ENCODE measurements at regions of chr22 and their contacts with region 1.

Region 1: DNA sequence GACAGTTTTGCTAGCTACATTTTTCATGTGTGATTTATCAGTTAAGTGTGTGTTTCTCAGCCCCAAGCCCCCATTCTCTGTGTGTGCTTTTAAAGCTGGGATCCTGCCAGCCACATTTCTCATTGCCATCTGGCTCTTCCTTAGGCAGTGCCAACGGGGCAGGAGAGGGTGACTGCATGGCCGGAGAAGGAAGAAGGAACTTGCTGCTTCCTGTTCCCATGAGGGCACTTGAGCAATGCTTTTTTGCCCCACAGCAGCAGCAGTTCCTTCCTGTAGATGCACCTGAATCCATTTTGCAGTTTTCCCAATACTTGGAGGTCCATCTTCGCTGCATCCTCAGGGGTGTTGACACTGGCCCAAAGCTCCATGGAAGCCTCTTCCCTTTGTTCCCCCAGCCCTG is 37.5 kb downstream of the TNRC6B start:
- DNase-seq: no peak
- H3K4me3 ChIP-seq: no peak overlapping the region
- H3K4me3 Mint-ChIP-seq: peak overlapping the region in 7 of 8 donors; percentile 58 to 89 (median 81)
- H3K27ac ChIP-seq: peak overlapping the region; percentile 64
- H3K27ac Mint-ChIP-seq: peak overlapping the region; percentile 83 to 94 (median 94)
- H3K4me1 ChIP-seq: peaks cover 95% of the 10 kb centered on the region
- H3K4me1 Mint-ChIP-seq: peaks cover 76 to 94% (median 84%) of the 10 kb centered on the region in 4 donors
- H3K27me3 ChIP-seq: no peaks in the 10 kb centered on the region
- H3K27me3 Mint-ChIP-seq: no peaks in the 10 kb centered on the region

Region 2: DNA sequence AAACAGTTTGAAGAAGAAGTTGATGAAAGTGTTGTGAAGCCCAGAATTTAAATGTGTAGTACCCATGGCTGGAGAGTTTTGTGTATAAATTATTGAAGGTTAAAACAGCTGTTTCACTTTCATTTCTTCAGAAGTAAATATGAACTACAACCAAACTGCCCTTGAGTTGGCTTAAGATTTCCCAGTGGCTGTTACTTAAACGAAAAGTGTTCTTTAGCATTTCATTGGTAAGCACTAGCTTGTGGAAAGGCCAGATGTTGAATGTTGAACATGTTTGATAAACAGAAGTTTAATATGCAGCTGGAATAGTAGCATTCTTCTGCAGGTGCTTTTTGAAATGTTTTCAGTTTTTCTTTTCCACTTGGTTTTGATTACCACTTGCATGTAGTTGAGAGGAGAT is 120.8 kb before region 1 on chr22:
- CTCF ChIA-PET with region 1: no interaction called
- POLR2A ChIA-PET with region 1: no interaction called
- intact Hi-C with region 1: no loop called
- DNase-seq: peak in 2 of 5 donors; percentile 14 to 23
- H3K4me3 ChIP-seq: no peak overlapping the region
- H3K4me3 Mint-ChIP-seq: peak overlapping the region; percentile 1 to 86 (median 51)
- H3K27ac ChIP-seq: no peak overlapping the region
- H3K27ac Mint-ChIP-seq: peak overlapping the region in 6 of 7 donors; percentile 2 to 83 (median 31)
- H3K4me1 ChIP-seq: peaks cover 73% of the 10 kb centered on the region
- H3K4me1 Mint-ChIP-seq: peaks cover 50 to 78% (median 66%) of the 10 kb centered on the region in 4 donors
- H3K27me3 ChIP-seq: no peaks in the 10 kb centered on the region
- H3K27me3 Mint-ChIP-seq: no peaks in the 10 kb centered on the region

Region 3: DNA sequence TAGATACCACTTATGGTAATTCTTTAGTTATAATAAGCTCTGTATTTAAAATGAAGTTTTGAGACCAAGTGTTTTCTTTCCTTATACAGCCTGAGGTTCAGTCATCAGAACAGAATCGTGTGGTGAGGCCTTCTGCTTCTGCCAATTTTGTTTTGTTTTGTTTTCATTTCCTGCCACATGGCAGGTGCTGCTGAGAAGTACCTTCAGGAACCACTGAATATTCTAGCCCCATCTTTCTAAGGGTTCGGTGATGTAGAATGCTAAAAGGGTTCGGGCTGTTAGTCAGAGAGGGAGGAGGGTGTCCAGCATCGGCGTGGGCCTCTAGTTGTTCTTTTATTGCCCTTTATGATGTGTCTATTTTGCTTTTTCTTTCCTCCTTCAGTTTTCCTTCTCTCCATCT is 11.7 kb before region 1 on chr22:
- CTCF ChIA-PET with region 1: interaction called, 3 read pairs
- POLR2A ChIA-PET with region 1: interaction called, 6 read pairs
- intact Hi-C with region 1: loop called (anchors 2 kb)
- DNase-seq: peak; percentile 45 to 68 (median 58)
- H3K4me3 ChIP-seq: no peak overlapping the region
- H3K4me3 Mint-ChIP-seq: peak overlapping the region; percentile 5 to 85 (median 66)
- H3K27ac ChIP-seq: no peak overlapping the region
- H3K27ac Mint-ChIP-seq: peak overlapping the region; percentile 82 to 96 (median 93)
- H3K4me1 ChIP-seq: peaks cover 62% of the 10 kb centered on the region
- H3K4me1 Mint-ChIP-seq: peaks cover 47 to 76% (median 67%) of the 10 kb centered on the region in 4 donors
- H3K27me3 ChIP-seq: no peaks in the 10 kb centered on the region
- H3K27me3 Mint-ChIP-seq: no peaks in the 10 kb centered on the region

Region 4: DNA sequence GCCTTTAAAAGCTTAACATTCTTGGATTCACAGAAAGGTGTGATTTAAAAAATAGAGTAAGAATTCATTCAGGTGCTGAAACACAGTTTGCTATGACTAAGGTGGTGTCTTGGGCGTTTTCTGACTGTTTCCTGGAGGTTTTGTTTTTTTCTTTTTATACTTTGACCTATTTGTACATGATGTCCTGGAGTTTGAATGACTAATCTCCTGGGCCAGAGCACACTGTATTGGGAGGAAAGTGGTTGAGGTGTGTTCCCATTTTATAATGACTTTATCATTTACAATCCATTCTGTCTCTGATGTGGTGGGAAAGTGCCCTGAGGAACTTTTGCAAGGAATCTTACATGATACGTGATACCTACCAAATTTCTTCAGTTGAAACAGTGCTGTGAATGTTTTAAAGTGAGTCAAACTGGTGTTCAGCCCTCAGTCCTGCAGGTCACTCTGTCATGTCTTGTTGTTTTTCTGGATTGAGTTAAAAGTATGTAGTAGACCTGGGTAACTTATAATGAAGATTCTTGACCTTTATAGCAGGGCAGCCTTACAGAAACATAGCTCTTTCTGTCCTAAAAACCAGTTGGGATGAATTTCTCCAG is 43.3 kb after region 1 on chr22:
- CTCF ChIA-PET with region 1: no interaction called
- POLR2A ChIA-PET with region 1: interaction called, 3 read pairs
- intact Hi-C with region 1: loop called (anchors 5 kb)
- DNase-seq: peak in 3 of 5 donors; percentile 32 to 58 (median 44)
- H3K4me3 ChIP-seq: no peak overlapping the region
- H3K4me3 Mint-ChIP-seq: peak overlapping the region; percentile 23 to 79 (median 68)
- H3K27ac ChIP-seq: peak overlapping the region; percentile 43
- H3K27ac Mint-ChIP-seq: peak overlapping the region; percentile 65 to 94 (median 81)
- H3K4me1 ChIP-seq: peaks cover 88% of the 10 kb centered on the region
- H3K4me1 Mint-ChIP-seq: peaks cover 54 to 83% (median 71%) of the 10 kb centered on the region in 4 donors
- H3K27me3 ChIP-seq: no peaks in the 10 kb centered on the region
- H3K27me3 Mint-ChIP-seq: no peaks in the 10 kb centered on the region

Measured in CD4-positive, alpha-beta memory T cell (primary cell).